ENCODE measurements at regions of chr22 and their contacts with region 1.

Region 1: DNA sequence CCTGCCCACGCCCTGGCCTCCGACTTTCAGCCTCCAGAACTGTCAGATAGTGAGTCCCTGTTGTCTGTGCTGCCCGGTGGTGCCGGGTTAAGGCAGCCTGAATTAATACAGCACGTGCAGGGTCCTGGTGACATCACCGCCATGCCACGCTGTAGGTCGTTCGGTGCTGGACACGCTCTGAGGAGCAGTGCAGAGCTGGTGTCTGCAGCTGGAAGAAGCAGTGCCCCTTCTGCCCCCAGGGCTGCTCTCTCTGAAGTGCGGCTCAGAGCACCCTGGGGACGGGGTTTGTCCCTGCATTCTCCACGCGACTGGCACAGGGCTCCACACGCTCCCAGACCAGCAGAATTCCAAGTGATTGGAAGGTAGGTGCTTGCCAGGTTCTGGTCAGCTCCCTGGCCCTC is 831.5 kb downstream of the TBC1D22A start:
- DNase-seq: no peak
- ATAC-seq: no peak
- H3K4me3 ChIP-seq: no peak overlapping the region
- H3K27ac ChIP-seq: no peak overlapping the region
- H3K4me1 ChIP-seq: no peaks in the 10 kb centered on the region
- H3K27me3 ChIP-seq: no peaks in the 10 kb centered on the region
- CTCF ChIP-seq: no peak

Region 2: GRCh38 chr22:47767403-47767802 is 173.5 kb after region 1 on chr22:
- CTCF ChIA-PET with region 1: no interaction called
- POLR2A ChIA-PET with region 1: interaction called, 10 read pairs
- in situ Hi-C with region 1: no loop called
- intact Hi-C with region 1: no loop called
- DNase-seq: no peak
- ATAC-seq: no peak
- H3K4me3 ChIP-seq: no peak overlapping the region
- H3K27ac ChIP-seq: no peak overlapping the region
- H3K4me1 ChIP-seq: no peaks in the 10 kb centered on the region
- H3K27me3 ChIP-seq: no peaks in the 10 kb centered on the region
- CTCF ChIP-seq: no peak

Region 3: GRCh38 chr22:48004038-48004437 is 410.1 kb after region 1 on chr22:
- CTCF ChIA-PET with region 1: no interaction called
- POLR2A ChIA-PET with region 1: no interaction called
- in situ Hi-C with region 1: no loop called
- intact Hi-C with region 1: no loop called
- DNase-seq: no peak
- ATAC-seq: no peak
- H3K4me3 ChIP-seq: no peak overlapping the region
- H3K27ac ChIP-seq: no peak overlapping the region
- H3K4me1 ChIP-seq: no peaks in the 10 kb centered on the region
- H3K27me3 ChIP-seq: no peaks in the 10 kb centered on the region
- CTCF ChIP-seq: no peak